ENCODE measurements at regions of chr6 and their contacts with region 1.

Region 1: DNA sequence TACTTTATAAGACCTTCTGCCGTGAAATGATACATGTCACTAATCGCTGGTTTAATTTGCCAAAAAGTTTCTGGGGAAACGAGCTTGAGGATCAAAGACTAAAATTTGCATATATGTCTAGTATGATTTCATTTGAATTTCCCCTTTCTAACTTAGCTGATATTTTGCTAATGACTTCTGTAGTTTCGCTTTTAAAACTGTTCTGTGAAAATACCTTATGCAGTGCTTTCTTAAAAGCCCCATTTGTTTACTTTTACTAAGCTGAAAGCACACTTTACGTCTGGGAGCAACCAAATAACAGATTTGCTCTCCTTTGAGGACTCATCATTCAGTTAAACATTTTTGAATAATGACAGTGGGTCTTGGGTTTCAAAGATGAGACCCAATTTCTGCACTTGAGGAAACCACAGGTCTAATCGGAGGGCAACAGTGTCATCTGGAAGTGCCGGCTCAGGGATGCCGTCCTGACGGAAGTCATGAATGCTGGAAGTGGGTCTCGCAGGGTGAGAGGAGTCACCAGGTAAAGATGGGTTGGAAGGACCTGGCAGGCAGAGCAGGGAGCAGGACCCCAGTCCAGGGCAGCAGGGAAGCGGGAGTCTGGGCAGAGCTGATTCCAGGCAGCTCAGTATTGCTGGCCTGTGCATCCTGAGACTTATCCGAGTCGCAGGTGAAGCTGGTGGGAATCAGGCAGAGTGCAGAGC is 33.2 kb downstream of the PLEKHG1 start:
- DNase-seq: peak; percentile 33
- ATAC-seq: peak; percentile 11
- H3K4me3 Mint-ChIP-seq: peak overlapping the region; percentile 99
- H3K27ac Mint-ChIP-seq: peak overlapping the region; percentile 97
- H3K4me1 Mint-ChIP-seq: peaks cover 91% of the 10 kb centered on the region
- H3K27me3 Mint-ChIP-seq: no peaks in the 10 kb centered on the region
- CTCF ChIP-seq: no peak

Region 2: GRCh38 chr6:150417899-150418826 is 214.8 kb before region 1 on chr6:
- CTCF ChIA-PET with region 1: interaction called, 12 read pairs
- POLR2A ChIA-PET with region 1: interaction called, 21 read pairs
- intact Hi-C with region 1: no loop called
- DNase-seq: no peak
- ATAC-seq: peak; percentile 90
- H3K4me3 Mint-ChIP-seq: peak overlapping the region; percentile 82
- H3K27ac Mint-ChIP-seq: peak overlapping the region; percentile 77
- H3K4me1 Mint-ChIP-seq: peaks cover 14% of the 10 kb centered on the region
- H3K27me3 Mint-ChIP-seq: peaks cover 16% of the 10 kb centered on the region
- CTCF ChIP-seq: peak; percentile 58

Region 3: DNA sequence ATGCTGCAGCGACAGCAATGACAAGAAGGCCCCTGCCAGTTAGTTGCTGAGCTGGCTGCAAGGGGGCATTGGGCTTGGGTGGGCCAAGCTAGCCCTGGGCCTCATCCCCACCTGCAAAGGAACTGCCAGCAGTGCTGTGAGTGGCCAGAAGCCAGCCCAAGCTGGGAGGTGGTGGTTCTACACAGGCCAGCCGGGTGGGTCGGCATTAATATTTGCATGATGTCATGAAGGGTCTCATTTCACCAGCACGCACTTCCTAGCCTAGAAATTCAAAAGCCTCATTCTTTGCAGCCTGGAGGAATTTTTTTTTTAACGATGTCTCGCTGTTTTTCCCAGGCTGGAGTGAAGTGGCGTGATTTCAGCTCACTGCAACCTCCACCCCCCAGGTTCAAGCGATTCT is 202.1 kb before region 1 on chr6:
- CTCF ChIA-PET with region 1: no interaction called
- POLR2A ChIA-PET with region 1: no interaction called
- intact Hi-C with region 1: no loop called
- DNase-seq: no peak
- ATAC-seq: no peak
- H3K4me3 Mint-ChIP-seq: no peak overlapping the region
- H3K27ac Mint-ChIP-seq: no peak overlapping the region
- H3K4me1 Mint-ChIP-seq: no peaks in the 10 kb centered on the region
- H3K27me3 Mint-ChIP-seq: peaks cover 1% of the 10 kb centered on the region
- CTCF ChIP-seq: no peak

Region 4: GRCh38 chr6:150560004-150560883 is 72.7 kb before region 1 on chr6:
- CTCF ChIA-PET with region 1: no interaction called
- POLR2A ChIA-PET with region 1: no interaction called
- intact Hi-C with region 1: no loop called
- DNase-seq: no peak
- ATAC-seq: no peak
- H3K4me3 Mint-ChIP-seq: no peak overlapping the region
- H3K27ac Mint-ChIP-seq: no peak overlapping the region
- H3K4me1 Mint-ChIP-seq: no peaks in the 10 kb centered on the region
- H3K27me3 Mint-ChIP-seq: peaks cover 23% of the 10 kb centered on the region
- CTCF ChIP-seq: no peak

Region 5: GRCh38 chr6:150685860-150686259 is 52.9 kb after region 1 on chr6:
- CTCF ChIA-PET with region 1: interaction called, 7 read pairs
- POLR2A ChIA-PET with region 1: interaction called, 27 read pairs
- intact Hi-C with region 1: loop called (anchors 2 kb)
- DNase-seq: no peak
- ATAC-seq: peak; percentile 32
- H3K4me3 Mint-ChIP-seq: no peak overlapping the region
- H3K27ac Mint-ChIP-seq: peak overlapping the region; percentile 85
- H3K4me1 Mint-ChIP-seq: peaks cover 95% of the 10 kb centered on the region
- H3K27me3 Mint-ChIP-seq: no peaks in the 10 kb centered on the region
- CTCF ChIP-seq: no peak

Region 6: GRCh38 chr6:150720774-150721233 is 87.9 kb after region 1 on chr6:
- CTCF ChIA-PET with region 1: no interaction called
- POLR2A ChIA-PET with region 1: interaction called, 15 read pairs
- intact Hi-C with region 1: no loop called
- DNase-seq: no peak
- ATAC-seq: peak; percentile 96
- H3K4me3 Mint-ChIP-seq: peak overlapping the region; percentile 25
- H3K27ac Mint-ChIP-seq: peak overlapping the region; percentile 80
- H3K4me1 Mint-ChIP-seq: peaks cover 74% of the 10 kb centered on the region
- H3K27me3 Mint-ChIP-seq: no peaks in the 10 kb centered on the region
- CTCF ChIP-seq: no peak

Region 7: GRCh38 chr6:150767571-150768018 is 134.7 kb after region 1 on chr6:
- CTCF ChIA-PET with region 1: no interaction called
- POLR2A ChIA-PET with region 1: interaction called, 18 read pairs
- intact Hi-C with region 1: no loop called
- DNase-seq: no peak
- ATAC-seq: no peak
- H3K4me3 Mint-ChIP-seq: no peak overlapping the region
- H3K27ac Mint-ChIP-seq: peak overlapping the region; percentile 32
- H3K4me1 Mint-ChIP-seq: peaks cover 50% of the 10 kb centered on the region
- H3K27me3 Mint-ChIP-seq: no peaks in the 10 kb centered on the region
- CTCF ChIP-seq: no peak

Measured in activated B cell treated with CpG ODN at 0.5 μM for 24 hours (primary cell).